GM13976 (cell line): ENCODE measurements at regions of chr17 and their contacts with region 1.

Region 1: DNA sequence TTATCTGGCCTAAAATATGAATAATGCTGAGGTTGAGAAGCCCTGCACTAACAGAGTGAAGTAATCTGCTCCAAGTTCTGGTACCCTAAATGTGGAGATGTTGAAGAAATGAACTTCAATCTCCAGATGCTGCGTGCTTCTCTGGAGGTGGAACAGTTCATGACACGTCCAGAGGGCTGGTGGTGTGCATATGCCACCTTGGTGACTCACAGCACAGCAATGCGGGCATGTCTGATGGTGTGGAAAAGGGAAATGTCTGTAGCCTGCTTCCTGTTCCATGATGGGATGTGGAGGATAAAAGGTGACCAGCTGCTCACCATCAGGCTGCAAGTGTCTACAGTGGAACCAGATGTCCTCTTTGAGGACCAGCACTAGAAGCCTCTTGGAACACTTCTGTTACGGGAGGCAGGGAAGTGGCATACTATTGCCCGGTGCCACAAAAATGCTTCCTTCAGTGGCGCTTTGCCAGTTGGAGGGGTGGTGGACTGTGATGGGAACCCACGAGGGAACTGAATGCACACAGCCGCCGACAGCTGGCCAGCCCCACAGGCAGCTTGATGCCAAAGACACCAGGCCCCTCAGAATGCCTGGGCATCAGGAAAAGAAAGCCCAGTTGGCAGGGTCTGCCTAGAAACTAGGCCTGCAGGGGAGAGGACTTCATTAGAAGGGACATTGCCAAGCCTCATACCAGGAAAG is 19.9 kb downstream of the SNX11 start:
- DNase-seq: peak; percentile 7
- CTCF ChIP-seq: no peak

Region 2: GRCh38 chr17:48084932-48085444 is 42.5 kb before region 1 on chr17:
- in situ Hi-C with region 1: loop called (anchors 5 kb)
- DNase-seq: no peak
- CTCF ChIP-seq: no peak

Region 3: DNA sequence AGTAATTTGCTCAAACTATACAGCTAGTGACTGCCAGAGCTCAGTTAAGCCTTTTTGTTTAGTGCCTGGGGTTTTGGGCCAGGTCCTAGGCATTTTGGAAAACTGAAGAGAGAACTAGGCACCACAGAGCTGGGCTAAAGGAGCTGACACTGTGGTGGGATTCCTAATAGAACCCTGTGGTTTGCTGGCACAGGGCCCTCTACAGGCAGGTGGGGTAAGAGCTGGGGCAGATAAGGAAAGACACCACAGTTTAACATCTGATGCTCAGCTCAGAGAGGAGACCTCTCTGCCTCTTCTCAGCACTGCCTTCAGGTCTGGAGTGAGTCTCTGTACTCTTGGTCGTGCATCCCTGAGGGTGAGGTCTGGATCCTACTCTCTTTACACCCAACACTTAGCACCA is 101.2 kb after region 1 on chr17:
- in situ Hi-C with region 1: no loop called
- DNase-seq: no peak
- CTCF ChIP-seq: no peak

Region 4: DNA sequence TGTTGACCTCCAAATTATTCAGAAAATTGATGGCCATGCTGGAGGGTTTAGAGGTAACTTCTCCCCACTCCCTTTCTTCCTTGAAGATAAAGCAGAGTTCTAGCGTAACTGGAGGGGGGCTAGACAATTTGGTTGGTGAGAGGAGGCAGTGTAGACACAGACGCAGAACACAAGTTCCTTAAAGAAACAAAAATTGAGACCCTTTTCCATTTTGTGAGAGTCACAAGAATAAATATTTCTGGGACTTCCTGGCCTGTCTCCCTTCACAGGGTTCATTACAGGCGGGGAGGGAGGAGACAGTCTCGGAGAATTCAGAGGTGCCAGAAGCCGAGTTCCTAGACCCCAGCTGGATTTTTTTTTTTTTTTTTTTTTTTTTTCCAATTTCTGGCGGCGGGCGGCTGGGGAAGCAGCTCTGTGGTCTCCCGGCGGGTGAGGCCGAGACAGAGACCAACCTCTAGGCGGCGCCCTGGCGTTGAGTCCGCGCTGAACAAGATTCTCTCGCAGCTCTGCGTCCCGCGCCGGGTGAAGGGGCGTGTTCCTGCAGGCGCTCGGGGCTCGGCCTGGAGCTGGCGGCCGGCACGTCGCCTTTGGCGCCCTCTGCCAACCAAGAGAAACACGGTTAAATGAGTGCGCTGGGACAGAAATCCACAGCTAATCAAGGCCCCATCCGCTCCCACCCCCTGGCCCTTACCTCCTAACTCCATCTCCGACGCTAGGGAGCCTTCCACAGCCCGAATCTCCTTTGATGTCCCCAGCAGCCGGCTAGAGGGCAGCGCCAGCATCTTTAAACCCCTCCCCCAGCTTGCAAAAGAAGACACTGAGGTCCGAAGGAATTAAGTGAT is 508.9 kb after region 1 on chr17:
- in situ Hi-C with region 1: no loop called
- DNase-seq: peak; percentile 86
- CTCF ChIP-seq: peak; percentile 72